ENCODE measurements at regions of chr2 and their contacts with region 1.

Region 1: DNA sequence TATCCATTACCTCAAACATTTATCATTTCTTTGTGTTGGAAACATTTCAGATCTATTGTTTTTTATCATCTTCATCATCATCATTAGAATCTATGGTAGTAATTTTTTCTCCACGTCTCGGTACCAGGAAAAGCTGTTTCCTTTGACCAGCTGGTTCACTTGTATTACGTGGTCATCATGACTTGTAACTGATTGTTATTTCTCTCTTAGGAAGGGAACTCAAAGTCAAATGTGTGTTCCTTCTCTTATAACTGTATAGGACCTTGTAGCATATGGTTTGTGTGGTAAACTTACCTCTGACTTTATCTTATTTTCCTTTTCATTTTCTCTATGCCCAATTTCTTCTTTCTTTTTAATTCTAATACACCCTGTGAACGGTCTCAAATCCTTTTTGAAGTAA is 16.5 kb downstream of the NCOA1 start:
- DNase-seq: no peak
- H3K4me3 Mint-ChIP-seq: no peak overlapping the region
- H3K27ac Mint-ChIP-seq: no peak overlapping the region
- H3K4me1 Mint-ChIP-seq: peaks cover 32% of the 10 kb centered on the region
- H3K27me3 Mint-ChIP-seq: no peaks in the 10 kb centered on the region

Region 2: DNA sequence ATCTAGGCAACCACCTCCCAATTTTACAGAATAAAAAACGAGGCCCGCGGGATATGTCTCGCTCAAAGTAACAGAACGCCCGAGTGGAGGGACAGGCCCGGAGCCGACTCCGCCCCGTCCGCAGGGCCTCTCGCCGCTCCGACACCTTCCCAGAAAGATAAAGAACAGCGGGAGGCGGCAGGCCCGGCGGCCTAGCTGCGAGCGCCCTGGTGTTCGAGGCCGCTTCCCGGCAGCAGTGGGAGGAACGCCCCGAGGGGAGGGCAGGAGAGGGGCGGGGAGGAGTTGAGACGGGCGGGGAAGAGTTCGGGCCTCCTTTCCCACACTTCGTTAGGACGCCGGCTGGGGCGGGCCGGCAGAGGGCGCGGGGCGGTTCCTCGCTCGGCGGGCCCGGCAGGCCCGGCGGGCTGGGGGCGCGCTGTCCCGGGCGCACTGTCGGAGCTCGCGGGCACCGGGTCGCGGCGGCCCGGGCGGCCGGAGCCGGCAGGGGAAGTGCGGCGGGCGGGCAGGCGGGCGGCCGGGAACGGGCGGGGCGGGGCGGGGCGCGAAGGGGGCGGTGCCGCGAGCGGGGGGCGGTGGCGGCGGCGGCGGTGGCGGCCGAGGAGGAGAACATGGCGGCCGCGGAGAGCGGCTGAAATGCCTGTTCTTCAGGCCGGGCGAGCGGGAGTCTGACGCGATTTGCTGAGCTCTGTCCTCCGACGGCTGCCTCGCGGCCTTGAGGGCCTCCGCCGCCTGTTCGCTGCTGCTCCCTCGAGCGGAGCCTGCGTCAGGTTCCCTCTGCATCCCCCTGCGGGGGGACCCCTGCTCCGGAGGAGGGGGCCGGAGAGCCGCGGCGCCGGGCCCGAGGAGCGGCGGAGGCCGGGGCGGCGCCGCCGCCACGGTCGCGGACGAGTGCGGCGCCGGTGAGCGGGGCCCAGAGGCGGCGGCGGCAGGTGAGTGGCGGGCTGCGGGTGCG is 16.6 kb before region 1 on chr2 and contains the start of gene NCOA1:
- CTCF ChIA-PET with region 1: interaction called, 5 read pairs
- POLR2A ChIA-PET with region 1: interaction called, 10 read pairs
- DNase-seq: peak; percentile 91
- H3K4me3 Mint-ChIP-seq: peak within 1 kb of the TSS; percentile 80
- H3K27ac Mint-ChIP-seq: peak within 1 kb of the TSS; percentile 75
- H3K4me1 Mint-ChIP-seq: peaks cover 40% of the 10 kb centered on the region
- H3K27me3 Mint-ChIP-seq: peaks cover 5% of the 10 kb centered on the region
- total RNA-seq, gene NCOA1: 15.8 to 16.6 TPM

Region 3: DNA sequence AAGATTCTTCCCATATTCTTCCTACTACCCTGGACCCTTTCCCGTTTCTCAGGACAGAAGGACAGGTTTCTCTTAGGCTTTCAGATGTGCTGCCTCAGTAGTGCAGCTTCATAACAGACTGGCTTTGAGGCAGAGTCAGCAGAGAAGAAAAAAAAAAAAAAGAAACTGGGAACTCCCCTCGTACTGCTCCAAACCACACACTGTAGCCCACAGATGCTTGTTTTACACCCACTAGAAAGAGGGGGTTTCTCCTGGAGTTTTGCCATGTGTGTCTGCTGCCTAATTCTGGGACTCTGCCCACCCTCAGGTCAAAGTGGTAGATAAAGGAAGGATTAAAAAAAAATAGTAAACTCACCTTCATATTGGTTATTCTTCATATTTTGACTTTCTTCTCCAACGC is 79.4 kb after region 1 on chr2:
- CTCF ChIA-PET with region 1: no interaction called
- POLR2A ChIA-PET with region 1: no interaction called
- DNase-seq: no peak
- H3K4me3 Mint-ChIP-seq: no peak overlapping the region
- H3K27ac Mint-ChIP-seq: no peak overlapping the region
- H3K4me1 Mint-ChIP-seq: peaks cover 14% of the 10 kb centered on the region
- H3K27me3 Mint-ChIP-seq: no peaks in the 10 kb centered on the region